Esophagus muscularis mucosa (tissue), 4 donors: ENCODE measurements at regions of chr18 and their contacts with region 1.

Region 1: DNA sequence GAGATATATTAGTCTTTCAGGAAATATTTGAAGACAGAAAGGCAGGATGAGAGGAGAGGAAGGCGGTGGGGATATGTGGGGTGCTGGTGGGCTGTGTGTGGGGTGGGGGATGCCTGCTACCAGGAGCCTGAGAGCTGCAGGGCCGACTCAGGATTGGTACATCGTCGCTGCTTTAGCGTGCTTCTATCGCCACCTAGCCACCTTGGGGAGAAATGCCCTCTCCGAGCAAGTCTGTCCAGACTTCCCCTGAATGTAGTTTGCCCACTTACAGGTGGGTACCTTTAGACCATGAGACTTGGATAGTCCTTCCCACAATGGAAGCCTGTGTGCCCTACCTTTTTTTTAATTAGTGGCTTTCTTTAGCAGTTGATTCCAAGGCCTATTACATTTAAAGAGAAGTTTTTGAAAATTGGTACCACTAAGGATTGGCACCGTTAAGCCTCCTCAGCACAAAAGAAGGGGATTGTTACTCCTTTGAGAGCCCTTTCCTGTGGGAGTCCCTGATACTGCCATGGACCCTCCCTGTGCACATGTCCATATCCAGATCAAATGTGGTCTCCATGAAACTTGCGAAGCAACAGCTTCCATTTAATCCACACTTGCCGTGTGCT is 114.1 kb upstream of the NDUFV2 start:
- DNase-seq: no peak
- H3K4me3 ChIP-seq: no peak overlapping the region
- H3K27ac ChIP-seq: no peak overlapping the region
- H3K4me1 ChIP-seq: peaks cover 0 to 23% (median 11%) of the 10 kb centered on the region in 4 donors
- H3K27me3 ChIP-seq: no peaks in the 10 kb centered on the region
- CTCF ChIP-seq: peak; percentile 75 to 89 (median 78)
- EP300 ChIP-seq: no peak
- POLR2A ChIP-seq: no peak

Region 2: GRCh38 chr18:8654503-8655451 is 333.6 kb before region 1 on chr18:
- intact Hi-C with region 1: loop called (anchors 1 kb)
- DNase-seq: no peak
- H3K4me3 ChIP-seq: no peak overlapping the region
- H3K27ac ChIP-seq: no peak overlapping the region
- H3K4me1 ChIP-seq: no peaks in the 10 kb centered on the region
- H3K27me3 ChIP-seq: no peaks in the 10 kb centered on the region
- CTCF ChIP-seq: peak; percentile 79 to 83 (median 83)
- EP300 ChIP-seq: no peak
- POLR2A ChIP-seq: no peak

Region 3: GRCh38 chr18:8696749-8697211 is 291.6 kb before region 1 on chr18:
- intact Hi-C with region 1: loop called (anchors 1 kb)
- DNase-seq: peak; percentile 96
- H3K4me3 ChIP-seq: no peak overlapping the region
- H3K27ac ChIP-seq: no peak overlapping the region
- H3K4me1 ChIP-seq: peaks cover 0 to 5% (median 4%) of the 10 kb centered on the region in 4 donors
- H3K27me3 ChIP-seq: no peaks in the 10 kb centered on the region
- CTCF ChIP-seq: peak; percentile 89 to 93 (median 92)
- EP300 ChIP-seq: no peak
- POLR2A ChIP-seq: no peak

Region 4: DNA sequence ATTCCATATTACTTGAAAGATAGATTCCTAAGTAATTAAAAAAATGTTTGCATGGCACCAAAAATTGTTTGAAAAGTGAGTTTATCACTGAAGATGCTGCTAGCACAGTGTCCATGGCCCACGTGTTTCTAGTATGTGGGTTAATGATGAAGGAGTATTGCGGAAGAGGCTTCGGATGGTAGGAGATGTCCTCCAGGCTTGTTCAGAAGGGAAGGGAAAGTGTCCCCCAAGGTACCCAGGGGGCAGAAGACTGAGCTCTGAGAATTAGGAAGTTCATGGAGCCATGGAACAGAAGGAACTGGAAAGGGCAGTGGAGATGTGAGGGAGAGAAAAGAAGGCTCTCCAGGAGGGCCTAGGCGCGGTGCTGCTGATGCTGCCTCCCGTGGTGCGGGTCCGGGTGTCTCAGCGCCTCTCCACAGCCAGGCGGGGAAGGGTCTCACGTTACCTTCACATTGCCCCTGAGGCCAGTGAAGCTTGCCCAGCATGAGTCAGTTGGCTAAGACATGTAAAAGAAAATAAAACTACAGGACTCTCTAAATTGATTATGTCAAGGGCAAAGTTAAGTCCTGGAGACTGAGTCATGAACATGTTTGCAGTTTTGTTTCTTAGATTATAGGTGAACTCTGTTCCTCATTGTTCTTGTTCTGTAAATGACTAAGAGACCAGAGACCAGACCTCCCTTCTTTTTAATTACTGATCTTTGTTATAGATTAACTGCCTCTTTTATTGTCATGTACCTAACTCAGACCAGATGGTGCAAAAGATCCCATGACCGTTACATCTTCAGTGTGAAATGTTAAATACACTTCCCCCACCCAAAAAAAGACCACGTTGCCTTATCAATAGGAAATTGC is 194.0 kb before region 1 on chr18:
- intact Hi-C with region 1: no loop called
- DNase-seq: no peak
- H3K4me3 ChIP-seq: no peak overlapping the region
- H3K27ac ChIP-seq: peak overlapping the region in 2 of 4 donors; percentile 2 to 25
- H3K4me1 ChIP-seq: peaks cover 6 to 55% (median 41%) of the 10 kb centered on the region in 4 donors
- H3K27me3 ChIP-seq: no peaks in the 10 kb centered on the region
- CTCF ChIP-seq: no peak
- EP300 ChIP-seq: no peak
- POLR2A ChIP-seq: no peak

Region 5: DNA sequence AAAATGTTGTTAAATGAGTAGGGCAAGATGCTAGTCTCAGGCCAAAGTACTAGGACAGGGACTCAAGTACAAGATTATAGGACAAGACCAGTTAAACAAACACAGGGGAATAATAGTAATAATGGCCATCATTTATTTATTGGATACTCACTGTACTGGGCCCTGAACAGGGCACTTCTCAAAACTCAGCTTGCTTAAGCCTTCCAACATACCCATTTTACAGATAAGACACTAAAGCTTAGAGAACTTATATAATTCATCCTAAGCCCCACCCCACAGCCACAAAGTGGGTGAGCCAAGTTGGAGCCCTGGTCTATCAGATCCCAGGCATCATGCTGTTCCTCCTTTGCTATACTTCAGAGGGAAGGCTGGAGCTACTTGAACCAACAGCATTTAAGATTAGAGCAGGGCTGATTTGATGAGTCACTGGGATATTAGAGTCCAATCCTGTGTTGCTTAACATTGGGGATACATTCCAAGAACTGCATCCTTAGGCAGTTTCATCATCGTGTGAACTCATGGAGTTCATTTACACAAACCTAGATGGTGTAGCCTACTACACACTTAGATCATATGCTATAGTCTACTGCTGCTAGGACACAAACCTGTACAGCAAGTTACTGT is 129.4 kb before region 1 on chr18:
- intact Hi-C with region 1: loop called (anchors 10 kb)
- DNase-seq: no peak
- H3K4me3 ChIP-seq: no peak overlapping the region
- H3K27ac ChIP-seq: peak overlapping the region in 1 of 4 donors; percentile 4
- H3K4me1 ChIP-seq: no peaks in the 10 kb centered on the region
- H3K27me3 ChIP-seq: no peaks in the 10 kb centered on the region
- CTCF ChIP-seq: no peak
- EP300 ChIP-seq: no peak
- POLR2A ChIP-seq: no peak